Naive thymus-derived CD4-positive, alpha-beta T cell (primary cell): ENCODE measurements at regions of chrX and their contacts with region 1.

Region 1: GRCh38 chrX:136694431-136695087 is 46.6 kb downstream of the CD40LG start:
- DNase-seq: peak in 7 of 9 donors; percentile 54 to 72 (median 64)
- ATAC-seq: peak; percentile 83
- H3K4me3 ChIP-seq: peak overlapping the region; percentile 40
- H3K4me3 Mint-ChIP-seq: peak overlapping the region; percentile 69 to 85 (median 80)
- H3K27ac ChIP-seq: peak overlapping the region; percentile 81
- H3K27ac Mint-ChIP-seq: peak overlapping the region; percentile 93 to 99 (median 97)
- H3K4me1 ChIP-seq: peaks cover 54 to 59% of the 10 kb centered on the region in 2 donors
- H3K4me1 Mint-ChIP-seq: peaks cover 21 to 83% (median 64%) of the 10 kb centered on the region in 7 donors
- H3K27me3 ChIP-seq: no peaks in the 10 kb centered on the region
- H3K27me3 Mint-ChIP-seq: no peaks in the 10 kb centered on the region

Region 2: GRCh38 chrX:136251041-136251991 is 443.2 kb before region 1 on chrX and contains the start of gene MAP7D3:
- CTCF ChIA-PET with region 1: no interaction called
- POLR2A ChIA-PET with region 1: no interaction called
- intact Hi-C with region 1: loop called in 1 of 2 experiments (anchors 1 kb)
- DNase-seq: peak; percentile 54 to 74 (median 66)
- ATAC-seq: peak; percentile 96
- H3K4me3 ChIP-seq: peak within 1 kb of the TSS; percentile 58
- H3K4me3 Mint-ChIP-seq: peak within 1 kb of the TSS; percentile 84 to 98 (median 91)
- H3K27ac ChIP-seq: peak within 1 kb of the TSS; percentile 67
- H3K27ac Mint-ChIP-seq: peak within 1 kb of the TSS; percentile 82 to 97 (median 89)
- H3K4me1 ChIP-seq: no peaks in the 10 kb centered on the region
- H3K4me1 Mint-ChIP-seq: peaks cover 0 to 15% (median 8%) of the 10 kb centered on the region in 7 donors
- H3K27me3 ChIP-seq: no peaks in the 10 kb centered on the region
- H3K27me3 Mint-ChIP-seq: no peaks in the 10 kb centered on the region
- total RNA-seq, gene MAP7D3: 5.9 to 15.8 (median 7.7) TPM

Region 3: GRCh38 chrX:136525738-136526606 is 168.6 kb before region 1 on chrX:
- CTCF ChIA-PET with region 1: no interaction called
- POLR2A ChIA-PET with region 1: no interaction called
- intact Hi-C with region 1: no loop called
- DNase-seq: no peak
- ATAC-seq: no peak
- H3K4me3 ChIP-seq: no peak overlapping the region
- H3K4me3 Mint-ChIP-seq: no peak overlapping the region
- H3K27ac ChIP-seq: no peak overlapping the region
- H3K27ac Mint-ChIP-seq: no peak overlapping the region
- H3K4me1 ChIP-seq: no peaks in the 10 kb centered on the region
- H3K4me1 Mint-ChIP-seq: peaks cover 6 to 16% (median 12%) of the 10 kb centered on the region in 7 donors
- H3K27me3 ChIP-seq: no peaks in the 10 kb centered on the region
- H3K27me3 Mint-ChIP-seq: peaks cover 0 to 6% (median 0%) of the 10 kb centered on the region in 5 donors

Region 4: DNA sequence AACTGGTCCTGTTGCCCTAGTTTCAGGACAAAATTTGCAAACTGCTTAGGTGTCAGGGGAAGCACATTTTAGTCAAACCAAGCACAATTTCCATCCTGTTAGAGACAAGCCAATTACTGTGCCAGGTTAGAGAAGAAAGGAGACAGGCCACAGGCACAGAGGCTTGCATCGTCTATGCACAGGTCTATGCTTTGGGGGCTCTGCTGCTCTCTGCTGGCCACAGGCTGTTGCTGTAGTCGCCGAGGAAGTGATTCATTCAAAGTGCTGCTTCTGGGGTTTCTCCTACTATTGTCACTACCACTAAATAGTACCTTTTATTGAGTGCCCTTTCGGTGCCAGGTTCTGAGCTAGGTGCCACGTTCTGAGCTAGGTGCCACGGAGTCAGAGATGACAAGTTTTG is 117.0 kb before region 1 on chrX:
- CTCF ChIA-PET with region 1: interaction called, 10 read pairs
- POLR2A ChIA-PET with region 1: interaction called, 5 read pairs
- intact Hi-C with region 1: loop called (anchors 1 to 2 kb)
- DNase-seq: peak; percentile 30 to 74 (median 62)
- ATAC-seq: peak; percentile 99
- H3K4me3 ChIP-seq: no peak overlapping the region
- H3K4me3 Mint-ChIP-seq: peak overlapping the region in 2 of 10 donors; percentile 20 to 63
- H3K27ac ChIP-seq: no peak overlapping the region
- H3K27ac Mint-ChIP-seq: peak overlapping the region in 8 of 9 donors; percentile 10 to 83 (median 67)
- H3K4me1 ChIP-seq: peaks cover 3 to 4% of the 10 kb centered on the region in 2 donors
- H3K4me1 Mint-ChIP-seq: peaks cover 0 to 22% (median 11%) of the 10 kb centered on the region in 7 donors
- H3K27me3 ChIP-seq: no peaks in the 10 kb centered on the region
- H3K27me3 Mint-ChIP-seq: no peaks in the 10 kb centered on the region

Region 5: DNA sequence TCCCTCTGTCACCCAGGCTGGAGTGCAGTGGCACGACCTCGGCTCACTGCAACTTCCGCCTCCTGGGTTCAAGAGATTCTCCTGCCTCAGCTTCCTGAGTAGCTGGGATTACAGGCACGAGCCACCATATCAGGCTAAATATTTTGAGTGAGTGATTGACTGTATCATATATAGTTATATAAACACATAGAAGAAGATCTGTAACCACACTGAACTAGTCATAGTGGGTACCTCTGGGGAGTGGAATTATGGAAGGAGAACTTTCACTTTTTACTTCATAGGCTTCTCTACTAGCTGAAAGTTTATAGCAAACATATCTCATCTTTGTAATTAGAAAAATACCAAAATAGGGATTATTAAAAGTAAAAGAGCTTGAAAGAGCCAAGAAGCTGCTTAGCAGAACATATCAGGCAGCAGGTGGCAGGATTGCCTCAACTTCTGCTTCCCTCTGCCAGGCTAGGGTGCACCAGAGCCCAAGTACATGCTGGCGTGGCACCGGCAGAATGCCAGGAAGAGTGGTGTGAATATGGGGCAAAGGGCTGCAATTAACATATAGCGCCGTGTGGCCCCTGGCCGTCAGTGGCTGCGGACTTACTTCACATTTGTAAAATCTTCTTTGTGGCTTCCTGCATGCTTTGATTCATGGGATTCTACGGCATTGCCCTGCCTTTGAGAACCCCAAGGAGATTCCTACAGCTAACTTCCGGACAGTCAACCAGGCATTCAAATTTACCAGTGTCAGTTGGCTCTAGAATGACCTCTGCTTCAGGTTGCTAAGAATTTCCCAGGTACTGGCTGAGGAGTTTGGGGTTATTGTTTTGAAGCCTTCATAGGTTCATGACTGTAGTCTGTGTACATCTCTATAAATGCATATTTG is 86.0 kb before region 1 on chrX:
- CTCF ChIA-PET with region 1: interaction called, 83 read pairs
- POLR2A ChIA-PET with region 1: interaction called, 48 read pairs
- intact Hi-C with region 1: loop called (anchors 1 kb)
- DNase-seq: peak; percentile 18 to 72 (median 56)
- ATAC-seq: peak; percentile 85
- H3K4me3 ChIP-seq: peak overlapping the region; percentile 40
- H3K4me3 Mint-ChIP-seq: peak overlapping the region; percentile 31 to 81 (median 73)
- H3K27ac ChIP-seq: peak overlapping the region; percentile 58
- H3K27ac Mint-ChIP-seq: peak overlapping the region; percentile 62 to 91 (median 85)
- H3K4me1 ChIP-seq: peaks cover 16 to 21% of the 10 kb centered on the region in 2 donors
- H3K4me1 Mint-ChIP-seq: peaks cover 7 to 52% (median 46%) of the 10 kb centered on the region in 7 donors
- H3K27me3 ChIP-seq: no peaks in the 10 kb centered on the region
- H3K27me3 Mint-ChIP-seq: no peaks in the 10 kb centered on the region

Region 6: GRCh38 chrX:136652822-136653723 is 41.5 kb before region 1 on chrX:
- CTCF ChIA-PET with region 1: interaction called, 13 read pairs
- POLR2A ChIA-PET with region 1: interaction called, 34 read pairs
- intact Hi-C with region 1: loop called (anchors 1 kb)
- DNase-seq: peak in 2 of 9 donors; percentile 39 to 55
- ATAC-seq: peak; percentile 42
- H3K4me3 ChIP-seq: peak overlapping the region; percentile 94
- H3K4me3 Mint-ChIP-seq: peak overlapping the region; percentile 79 to 99 (median 96)
- H3K27ac ChIP-seq: peak overlapping the region; percentile 79
- H3K27ac Mint-ChIP-seq: peak overlapping the region; percentile 85 to 99 (median 95)
- H3K4me1 ChIP-seq: peaks cover 14 to 30% of the 10 kb centered on the region in 2 donors
- H3K4me1 Mint-ChIP-seq: peaks cover 12 to 57% (median 42%) of the 10 kb centered on the region in 7 donors
- H3K27me3 ChIP-seq: peaks cover 0 to 3% of the 10 kb centered on the region in 2 donors
- H3K27me3 Mint-ChIP-seq: no peaks in the 10 kb centered on the region

Region 7: DNA sequence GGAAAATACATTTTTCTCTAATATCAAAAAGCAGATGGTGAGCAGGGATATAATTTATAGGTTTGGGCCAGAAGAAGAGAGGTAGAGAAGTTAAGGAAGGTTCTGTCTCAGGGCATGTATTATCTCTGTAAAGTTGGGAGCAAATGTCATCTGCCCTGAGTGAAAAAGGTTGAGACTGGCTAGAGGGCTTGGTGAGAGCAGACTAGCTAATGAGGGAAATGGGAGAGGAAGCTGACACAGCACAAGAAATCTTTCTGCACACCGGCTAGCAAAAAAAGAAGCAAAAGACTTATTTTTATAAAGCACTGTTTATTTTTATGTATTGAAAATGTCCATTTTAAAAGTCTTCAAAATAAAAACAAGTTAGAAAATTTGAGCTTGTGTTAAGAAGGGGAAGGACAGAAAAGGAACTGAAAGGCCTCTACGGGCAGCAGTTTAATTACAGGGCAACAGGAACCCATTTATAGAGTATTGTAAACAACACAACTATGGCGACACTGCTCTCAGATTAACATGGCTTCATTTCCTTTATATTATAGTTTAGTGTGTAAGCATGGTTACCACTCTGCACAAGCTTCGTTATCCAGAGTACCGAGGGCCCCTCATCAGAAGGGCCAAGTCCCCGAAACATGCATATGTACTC is 29.2 kb before region 1 on chrX:
- CTCF ChIA-PET with region 1: no interaction called
- POLR2A ChIA-PET with region 1: interaction called, 26 read pairs
- intact Hi-C with region 1: loop called in 1 of 2 experiments (anchors 2 kb)
- DNase-seq: no peak
- ATAC-seq: no peak
- H3K4me3 ChIP-seq: no peak overlapping the region
- H3K4me3 Mint-ChIP-seq: peak overlapping the region in 7 of 10 donors; percentile 11 to 81 (median 41)
- H3K27ac ChIP-seq: no peak overlapping the region
- H3K27ac Mint-ChIP-seq: peak overlapping the region; percentile 27 to 88 (median 69)
- H3K4me1 ChIP-seq: peaks cover 16 to 59% of the 10 kb centered on the region in 2 donors
- H3K4me1 Mint-ChIP-seq: peaks cover 34 to 84% (median 78%) of the 10 kb centered on the region in 7 donors
- H3K27me3 ChIP-seq: no peaks in the 10 kb centered on the region
- H3K27me3 Mint-ChIP-seq: no peaks in the 10 kb centered on the region

Region 8: GRCh38 chrX:136745215-136746173 is 50.9 kb after region 1 on chrX:
- CTCF ChIA-PET with region 1: no interaction called
- POLR2A ChIA-PET with region 1: no interaction called
- intact Hi-C with region 1: no loop called
- DNase-seq: no peak
- ATAC-seq: peak; percentile 41
- H3K4me3 ChIP-seq: no peak overlapping the region
- H3K4me3 Mint-ChIP-seq: peak overlapping the region in 6 of 10 donors; percentile 14 to 75 (median 20)
- H3K27ac ChIP-seq: no peak overlapping the region
- H3K27ac Mint-ChIP-seq: peak overlapping the region in 7 of 9 donors; percentile 5 to 81 (median 64)
- H3K4me1 ChIP-seq: peaks cover 14 to 36% of the 10 kb centered on the region in 2 donors
- H3K4me1 Mint-ChIP-seq: peaks cover 36 to 75% (median 73%) of the 10 kb centered on the region in 7 donors
- H3K27me3 ChIP-seq: no peaks in the 10 kb centered on the region
- H3K27me3 Mint-ChIP-seq: no peaks in the 10 kb centered on the region

Region 9: DNA sequence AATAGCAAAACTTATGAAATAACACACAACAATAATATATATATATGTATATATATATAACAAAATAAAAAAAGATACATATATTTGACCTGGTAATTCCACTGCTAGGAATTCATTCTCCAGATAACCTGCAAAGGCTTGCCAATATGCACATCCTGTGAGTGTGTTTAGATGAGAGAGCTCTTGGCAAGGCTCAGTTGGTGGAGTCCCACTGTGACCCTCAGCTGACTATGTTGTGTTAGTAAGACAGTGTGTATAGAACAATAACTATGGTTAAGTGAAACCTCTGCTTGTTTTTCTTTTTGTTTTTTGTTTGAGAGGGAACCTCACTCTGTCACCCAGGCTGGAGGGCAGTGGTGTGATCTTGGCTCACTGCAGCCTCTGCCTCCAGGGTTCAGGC is 225.4 kb after region 1 on chrX:
- CTCF ChIA-PET with region 1: no interaction called
- POLR2A ChIA-PET with region 1: interaction called, 6 read pairs
- intact Hi-C with region 1: loop called in 1 of 2 experiments (anchors 5 kb)
- DNase-seq: no peak
- ATAC-seq: no peak
- H3K4me3 ChIP-seq: no peak overlapping the region
- H3K4me3 Mint-ChIP-seq: no peak overlapping the region
- H3K27ac ChIP-seq: no peak overlapping the region
- H3K27ac Mint-ChIP-seq: no peak overlapping the region
- H3K4me1 ChIP-seq: no peaks in the 10 kb centered on the region
- H3K4me1 Mint-ChIP-seq: peaks cover 0 to 2% (median 2%) of the 10 kb centered on the region in 7 donors
- H3K27me3 ChIP-seq: no peaks in the 10 kb centered on the region
- H3K27me3 Mint-ChIP-seq: no peaks in the 10 kb centered on the region